GM12878 (cell line): ENCODE measurements at regions of chr4 and their contacts with region 1.

Region 1: DNA sequence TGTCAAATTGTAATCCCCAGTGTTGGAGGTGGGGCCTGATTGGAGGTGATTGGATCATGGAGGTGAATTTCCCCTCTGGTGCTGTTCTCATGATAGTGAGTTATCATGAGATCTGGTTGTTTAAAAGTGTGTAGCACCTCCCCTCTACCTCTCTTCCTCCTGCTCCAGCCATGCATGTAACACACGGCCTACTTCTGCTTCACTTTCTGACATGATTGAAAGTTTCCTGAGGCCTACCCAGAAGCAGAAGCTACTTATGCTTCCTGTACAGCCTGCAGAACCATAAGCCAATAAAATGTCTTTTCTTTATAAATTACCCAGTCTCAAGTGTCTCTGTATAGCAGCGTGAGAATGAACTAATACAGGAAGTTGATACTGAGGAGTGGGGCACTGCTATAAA is 61.7 kb upstream of the DDX60 start:
- DNase-seq: no peak
- ATAC-seq: no peak
- H3K4me3 ChIP-seq: no peak overlapping the region
- H3K27ac ChIP-seq: no peak overlapping the region
- H3K4me1 ChIP-seq: no peaks in the 10 kb centered on the region
- H3K27me3 ChIP-seq: no peaks in the 10 kb centered on the region
- CTCF ChIP-seq: no peak
- EP300 ChIP-seq: no peak
- POLR2A ChIP-seq: no peak
- RAD21 ChIP-seq: no peak

Region 2: DNA sequence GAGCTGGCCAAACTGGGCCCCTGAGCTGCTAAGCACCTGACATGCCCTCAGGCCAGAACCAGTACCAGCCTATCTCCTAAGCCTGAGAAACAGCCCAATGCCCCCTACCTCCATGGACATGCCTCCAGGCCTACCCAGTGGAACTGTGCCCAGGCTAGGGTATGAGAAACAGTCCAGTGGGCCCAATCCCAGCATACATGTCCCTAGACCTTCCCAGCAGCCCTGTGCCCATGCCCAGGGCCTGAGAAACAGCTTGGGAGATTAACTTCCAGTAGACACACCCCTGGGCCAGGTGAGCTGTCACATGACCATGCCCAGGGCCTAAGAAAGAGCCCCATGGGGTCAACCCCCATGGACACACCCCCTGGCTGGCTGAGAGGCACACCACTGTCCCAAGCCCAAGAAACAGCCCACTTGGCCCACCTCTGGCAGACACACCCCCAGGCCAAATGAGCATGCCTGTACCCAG is 550.9 kb after region 1 on chr4:
- CTCF ChIA-PET with region 1: no interaction called
- POLR2A ChIA-PET with region 1: interaction called, 10 read pairs
- RAD21 ChIA-PET with region 1: no interaction called
- SMC1A ChIA-PET with region 1: no interaction called
- in situ Hi-C with region 1: no loop called
- intact Hi-C with region 1: no loop called
- DNase-seq: no peak
- ATAC-seq: no peak
- H3K4me3 ChIP-seq: no peak overlapping the region
- H3K27ac ChIP-seq: no peak overlapping the region
- H3K4me1 ChIP-seq: no peaks in the 10 kb centered on the region
- H3K27me3 ChIP-seq: no peaks in the 10 kb centered on the region
- CTCF ChIP-seq: no peak
- EP300 ChIP-seq: no peak
- POLR2A ChIP-seq: no peak
- RAD21 ChIP-seq: no peak

Region 3: DNA sequence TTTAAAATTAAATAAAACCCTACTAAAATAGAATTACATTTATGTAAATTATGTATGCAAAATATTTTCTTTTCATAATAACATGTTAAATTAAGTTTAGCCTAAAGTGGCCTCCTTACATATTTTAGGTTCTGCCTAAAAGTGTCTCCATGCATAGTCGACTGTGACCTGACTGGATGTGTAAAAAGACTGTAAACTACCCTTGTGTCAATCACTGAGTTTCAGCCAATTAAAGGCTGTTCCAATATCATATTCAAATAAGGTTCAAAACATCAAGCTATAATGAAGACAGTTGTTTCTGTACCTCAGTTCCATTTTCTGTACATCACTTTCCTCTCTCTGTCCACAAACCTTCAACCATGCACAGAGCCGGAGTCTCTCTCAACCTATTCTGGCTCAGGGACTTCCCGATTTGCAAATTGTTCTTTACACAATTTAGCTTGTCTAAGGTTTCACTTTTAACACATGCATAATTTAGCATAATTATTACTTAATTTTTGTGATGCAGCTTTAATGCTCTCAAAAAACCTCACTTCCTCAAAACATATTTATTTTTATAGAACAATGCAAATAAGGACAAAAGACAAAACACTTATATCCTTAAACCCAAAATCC is 830.3 kb after region 1 on chr4:
- CTCF ChIA-PET with region 1: no interaction called
- POLR2A ChIA-PET with region 1: no interaction called
- RAD21 ChIA-PET with region 1: no interaction called
- SMC1A ChIA-PET with region 1: no interaction called
- in situ Hi-C with region 1: no loop called
- intact Hi-C with region 1: no loop called
- DNase-seq: peak; percentile 78
- ATAC-seq: peak; percentile 96
- H3K4me3 ChIP-seq: peak overlapping the region; percentile 29; the same call in 1 of the 2 replicates
- H3K27ac ChIP-seq: peak overlapping the region; percentile 72
- H3K4me1 ChIP-seq: peaks cover 16% of the 10 kb centered on the region
- H3K27me3 ChIP-seq: no peaks in the 10 kb centered on the region
- CTCF ChIP-seq: no peak
- EP300 ChIP-seq: peak in 1 of 2 experiments; percentile 37; a peak in 1 of 4 replicates
- POLR2A ChIP-seq: no peak
- RAD21 ChIP-seq: no peak